A673 (cell line): ENCODE measurements at regions of chr6 and their contacts with region 1.

Region 1: DNA sequence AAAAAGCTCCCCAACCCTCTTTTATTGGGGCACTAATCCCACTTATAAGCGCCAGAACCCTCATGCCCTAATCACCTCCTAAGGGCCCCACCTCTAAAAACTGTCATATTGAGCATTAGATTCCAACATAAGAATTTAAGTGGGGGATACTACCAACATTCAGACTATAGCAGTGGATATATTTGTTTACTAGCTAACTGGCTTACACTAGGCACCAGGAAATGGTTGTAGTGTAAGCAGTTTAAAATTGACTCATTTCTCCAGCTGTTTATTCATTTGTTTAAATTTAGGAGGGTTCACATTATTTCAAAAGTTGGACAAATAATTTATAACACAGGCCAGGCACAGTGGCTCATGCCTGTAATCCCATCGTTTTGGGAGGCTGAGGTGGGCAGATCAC is 22.9 kb downstream of the MTO1 start:
- DNase-seq: no peak
- H3K4me3 ChIP-seq: no peak overlapping the region
- H3K27ac ChIP-seq: no peak overlapping the region
- H3K4me1 ChIP-seq: no peaks in the 10 kb centered on the region
- H3K27me3 ChIP-seq: no peaks in the 10 kb centered on the region
- CTCF ChIP-seq: no peak

Region 2: GRCh38 chr6:73471686-73472290 is 12.7 kb before region 1 on chr6:
- CTCF ChIA-PET with region 1: no interaction called
- POLR2A ChIA-PET with region 1: interaction called, 10 read pairs
- intact Hi-C with region 1: no loop called
- DNase-seq: no peak
- H3K4me3 ChIP-seq: no peak overlapping the region
- H3K27ac ChIP-seq: no peak overlapping the region
- H3K4me1 ChIP-seq: no peaks in the 10 kb centered on the region
- H3K27me3 ChIP-seq: no peaks in the 10 kb centered on the region
- CTCF ChIP-seq: no peak

Region 3: GRCh38 chr6:74145931-74146330 is 661.5 kb after region 1 on chr6:
- CTCF ChIA-PET with region 1: no interaction called
- POLR2A ChIA-PET with region 1: no interaction called
- intact Hi-C with region 1: no loop called
- DNase-seq: no peak
- H3K4me3 ChIP-seq: no peak overlapping the region
- H3K27ac ChIP-seq: no peak overlapping the region
- H3K4me1 ChIP-seq: no peaks in the 10 kb centered on the region
- H3K27me3 ChIP-seq: no peaks in the 10 kb centered on the region
- CTCF ChIP-seq: no peak

Region 4: GRCh38 chr6:75283907-75284631 is 1799.6 kb after region 1 on chr6:
- CTCF ChIA-PET with region 1: no interaction called
- POLR2A ChIA-PET with region 1: no interaction called
- intact Hi-C with region 1: no loop called
- DNase-seq: no peak
- H3K4me3 ChIP-seq: peak overlapping the region; percentile 97
- H3K27ac ChIP-seq: peak overlapping the region; percentile 85
- H3K4me1 ChIP-seq: peaks cover 36% of the 10 kb centered on the region
- H3K27me3 ChIP-seq: no peaks in the 10 kb centered on the region
- CTCF ChIP-seq: no peak